ENCODE measurements at regions of chr10 and their contacts with region 1.

Region 1: DNA sequence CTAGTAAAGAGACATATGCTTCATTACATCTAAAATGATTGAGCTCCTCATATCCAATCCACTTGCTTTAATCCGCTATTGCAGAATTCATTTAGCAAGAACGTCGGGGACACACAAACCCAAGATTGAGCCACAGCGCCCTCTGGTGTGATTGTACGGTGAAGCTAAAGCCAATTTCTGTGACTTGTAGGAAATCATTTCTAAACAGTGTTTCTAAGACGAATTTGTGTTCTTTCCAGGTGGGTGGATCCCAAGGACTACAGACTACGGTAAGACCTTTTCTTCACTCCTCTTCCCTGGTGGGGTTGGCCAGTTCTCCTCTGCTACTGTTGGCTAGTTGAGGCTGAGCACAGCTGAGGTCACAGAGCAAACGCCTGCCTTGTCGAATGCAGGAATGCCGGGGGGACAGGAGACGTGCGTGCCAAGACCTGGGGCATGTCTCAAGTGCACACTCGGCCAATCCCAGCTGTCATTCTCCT is 5.2 kb downstream of the DMBT1 start:
- DNase-seq: peak; percentile 61 to 85
- ATAC-seq: peak; percentile 65 to 74
- H3K4me3 ChIP-seq: no peak overlapping the region
- H3K27ac ChIP-seq: peak overlapping the region in 1 of 2 experiments; percentile 49; a peak in 2 of 6 replicates
- H3K4me1 ChIP-seq: peaks cover 9% of the 10 kb centered on the region; the same call in 1 of the 3 replicates
- CTCF ChIP-seq: peak; percentile 92
- EP300 ChIP-seq: no peak
- POLR2A ChIP-seq: no peak
- RAD21 ChIP-seq: peak; percentile 94 to 95

Region 2: DNA sequence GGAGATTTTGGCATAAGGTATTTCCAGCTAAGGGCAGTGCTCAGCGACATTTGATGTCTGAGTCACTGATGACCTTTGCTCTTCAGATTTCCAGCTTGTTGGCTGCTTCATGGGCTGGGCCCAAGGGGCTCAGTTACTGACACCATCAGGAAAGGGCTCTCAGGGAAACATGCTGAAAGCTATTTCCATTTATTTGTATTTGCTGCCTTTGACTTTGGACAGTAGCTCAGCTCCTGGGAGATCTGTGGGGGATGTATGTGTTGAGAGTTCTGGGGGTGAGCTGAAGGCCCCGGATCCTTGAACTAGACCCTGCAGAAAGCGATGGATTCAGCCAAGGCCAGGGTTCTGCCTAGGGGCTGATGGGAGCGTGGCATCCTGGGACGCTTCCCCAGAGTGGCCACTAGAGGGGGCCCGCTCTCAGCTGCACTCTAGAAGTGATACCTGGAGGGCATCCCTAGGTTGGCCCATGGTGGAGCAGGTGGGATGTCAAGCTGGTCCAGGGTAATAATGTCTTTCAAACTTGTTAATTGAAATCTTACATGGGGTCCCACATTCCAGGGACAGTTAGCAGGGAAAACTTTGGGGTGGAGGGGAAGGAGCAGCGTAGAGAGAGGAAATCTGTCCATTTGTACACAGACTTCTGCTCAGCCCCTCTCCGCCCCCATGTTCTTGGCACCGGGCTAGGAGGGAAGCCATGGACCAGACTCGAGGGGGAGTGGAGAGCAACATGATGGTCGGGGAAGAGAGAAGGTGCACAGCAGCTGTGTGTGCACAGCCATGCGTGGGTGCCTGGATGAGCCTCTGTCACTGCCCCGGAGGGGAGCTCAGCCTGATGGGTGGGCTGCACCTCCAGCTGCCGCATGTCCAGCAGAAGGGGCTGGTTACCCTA is 297.7 kb before region 1 on chr10:
- CTCF ChIA-PET with region 1: interaction called, 10 read pairs
- POLR2A ChIA-PET with region 1: no interaction called
- DNase-seq: peak; percentile 61 to 76
- ATAC-seq: peak; percentile 82 to 93
- H3K4me3 ChIP-seq: no peak overlapping the region
- H3K27ac ChIP-seq: peak overlapping the region; percentile 65 to 67; a peak in 5 of 6 replicates
- H3K4me1 ChIP-seq: peaks cover 40% of the 10 kb centered on the region
- CTCF ChIP-seq: peak; percentile 78
- EP300 ChIP-seq: no peak
- POLR2A ChIP-seq: no peak
- RAD21 ChIP-seq: peak; percentile 53 to 64

Region 3: DNA sequence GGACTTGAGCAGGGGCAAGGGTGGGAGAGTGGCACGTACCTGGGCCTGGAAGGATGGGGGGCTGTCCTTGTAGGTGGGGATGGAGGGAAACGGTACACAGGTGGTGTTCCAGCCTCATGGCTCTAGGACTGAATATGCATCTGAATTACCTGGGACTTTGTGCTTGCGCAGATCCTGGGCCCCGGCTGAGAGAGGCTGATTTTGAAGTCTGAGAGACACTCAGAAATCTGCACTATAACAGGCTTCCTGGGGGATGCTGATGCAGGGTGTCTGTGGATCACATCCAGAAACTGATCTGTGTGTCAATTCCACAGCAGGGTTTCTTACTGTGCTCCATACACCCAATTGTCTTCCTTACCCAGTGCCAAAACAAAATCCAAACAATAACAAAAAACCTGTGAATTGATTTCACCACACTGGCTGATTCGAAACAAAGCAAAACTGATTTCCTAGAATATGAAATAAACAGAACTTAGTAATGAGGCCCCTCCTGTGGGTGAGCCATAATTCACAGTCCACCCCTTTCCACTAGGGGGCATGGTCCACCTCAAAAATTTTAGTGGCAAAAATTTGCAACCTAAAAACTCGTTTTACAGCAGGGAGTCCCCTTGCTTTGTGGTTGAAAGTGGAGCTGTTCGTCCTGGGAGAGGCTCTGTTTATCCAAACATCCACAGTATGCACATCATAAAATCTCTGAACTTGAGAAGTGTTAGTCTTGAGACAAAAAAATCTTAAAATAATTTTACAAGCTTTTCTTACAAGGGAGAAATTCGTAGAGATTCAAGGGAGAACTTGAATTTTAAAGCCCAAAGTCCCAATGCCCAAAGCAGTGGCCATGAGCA is 223.3 kb before region 1 on chr10:
- CTCF ChIA-PET with region 1: interaction called, 14 read pairs
- POLR2A ChIA-PET with region 1: no interaction called
- DNase-seq: peak; percentile 44 to 71
- ATAC-seq: peak; percentile 81 to 83
- H3K4me3 ChIP-seq: no peak overlapping the region
- H3K27ac ChIP-seq: peak overlapping the region; percentile 32 to 42; a peak in 3 of 6 replicates
- H3K4me1 ChIP-seq: peaks cover 16% of the 10 kb centered on the region
- CTCF ChIP-seq: peak; percentile 72
- EP300 ChIP-seq: no peak
- POLR2A ChIP-seq: no peak
- RAD21 ChIP-seq: peak; percentile 75 to 78

Region 4: DNA sequence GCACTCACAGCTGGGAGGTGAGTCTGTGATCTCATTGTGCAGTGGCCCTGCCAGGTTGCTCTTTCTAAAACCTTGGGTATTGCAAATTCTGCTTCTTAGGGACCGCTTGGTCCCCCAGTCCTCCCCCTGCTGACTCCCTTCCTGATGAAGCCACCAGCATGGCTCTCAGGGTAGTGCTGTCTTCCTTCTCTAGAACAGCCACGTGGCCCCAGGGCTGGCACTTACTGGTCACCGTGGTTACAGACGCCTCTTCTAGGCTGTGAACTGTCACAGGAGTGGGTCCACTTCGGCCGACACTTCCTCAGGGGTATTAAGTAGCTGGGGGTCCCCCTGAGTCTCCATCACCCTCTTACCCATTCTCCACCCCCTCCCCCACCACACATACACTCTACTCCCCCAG is 107.1 kb before region 1 on chr10:
- CTCF ChIA-PET with region 1: interaction called, 13 read pairs
- POLR2A ChIA-PET with region 1: no interaction called
- DNase-seq: no peak
- ATAC-seq: no peak
- H3K4me3 ChIP-seq: no peak overlapping the region
- H3K27ac ChIP-seq: no peak overlapping the region
- H3K4me1 ChIP-seq: peaks cover 8% of the 10 kb centered on the region; the same call in 2 of the 3 replicates
- CTCF ChIP-seq: no peak
- EP300 ChIP-seq: no peak
- POLR2A ChIP-seq: no peak
- RAD21 ChIP-seq: no peak

Region 5: DNA sequence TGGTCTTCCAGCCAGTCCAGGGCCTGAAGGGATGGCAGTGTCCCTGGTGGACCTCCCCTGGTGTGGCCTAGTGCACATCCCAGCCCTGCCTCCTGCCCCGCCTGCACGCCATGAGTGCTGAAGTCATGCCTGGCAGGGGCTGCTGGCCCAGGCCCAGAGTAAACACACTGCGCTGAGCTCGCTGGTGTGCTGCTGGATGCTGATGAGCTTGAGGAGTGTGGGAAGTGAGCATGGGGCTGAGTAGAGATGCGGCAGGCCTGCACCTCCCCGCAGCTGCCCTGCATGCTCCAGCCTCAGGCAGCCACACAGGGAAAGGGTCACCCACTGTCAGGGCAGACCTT is 61.2 kb before region 1 on chr10:
- CTCF ChIA-PET with region 1: interaction called, 10 read pairs
- POLR2A ChIA-PET with region 1: no interaction called
- DNase-seq: peak; percentile 35 to 75
- ATAC-seq: peak; percentile 90 to 98
- H3K4me3 ChIP-seq: no peak overlapping the region
- H3K27ac ChIP-seq: peak overlapping the region in 1 of 2 experiments; percentile 68; a peak in 3 of 6 replicates
- H3K4me1 ChIP-seq: peaks cover 12% of the 10 kb centered on the region
- CTCF ChIP-seq: no peak
- EP300 ChIP-seq: no peak
- POLR2A ChIP-seq: no peak
- RAD21 ChIP-seq: no peak

Region 6: GRCh38 chr10:122551450-122551849 is 14.3 kb before region 1 on chr10:
- CTCF ChIA-PET with region 1: interaction called, 32 read pairs
- POLR2A ChIA-PET with region 1: no interaction called
- DNase-seq: no peak
- ATAC-seq: peak in 1 of 2 experiments; percentile 28; a peak in 1 of 6 replicates
- H3K4me3 ChIP-seq: no peak overlapping the region
- H3K27ac ChIP-seq: no peak overlapping the region
- H3K4me1 ChIP-seq: no peaks in the 10 kb centered on the region
- CTCF ChIP-seq: no peak
- EP300 ChIP-seq: no peak
- POLR2A ChIP-seq: no peak
- RAD21 ChIP-seq: no peak